Activated naive CD4-positive, alpha-beta T cell treated with anti-CD3 and anti-CD28 coated beads for 36 hours (primary cell): ENCODE measurements at regions of chr1 and their contacts with region 1.

Region 1: GRCh38 chr1:904310-904950 is 19.3 kb upstream of the SAMD11 start:
- DNase-seq: peak; percentile 83
- H3K4me3 Mint-ChIP-seq: peak overlapping the region; percentile 72
- H3K27ac Mint-ChIP-seq: no peak overlapping the region
- H3K4me1 Mint-ChIP-seq: peaks cover 6% of the 10 kb centered on the region
- H3K27me3 Mint-ChIP-seq: peaks cover 39% of the 10 kb centered on the region

Region 2: GRCh38 chr1:869499-870244 is 34.8 kb before region 1 on chr1:
- CTCF ChIA-PET with region 1: interaction called, 5 read pairs
- intact Hi-C with region 1: loop called (anchors 5 kb)
- DNase-seq: peak; percentile 71
- H3K4me3 Mint-ChIP-seq: no peak overlapping the region
- H3K27ac Mint-ChIP-seq: no peak overlapping the region
- H3K4me1 Mint-ChIP-seq: peaks cover 3% of the 10 kb centered on the region
- H3K27me3 Mint-ChIP-seq: peaks cover 11% of the 10 kb centered on the region

Region 3: DNA sequence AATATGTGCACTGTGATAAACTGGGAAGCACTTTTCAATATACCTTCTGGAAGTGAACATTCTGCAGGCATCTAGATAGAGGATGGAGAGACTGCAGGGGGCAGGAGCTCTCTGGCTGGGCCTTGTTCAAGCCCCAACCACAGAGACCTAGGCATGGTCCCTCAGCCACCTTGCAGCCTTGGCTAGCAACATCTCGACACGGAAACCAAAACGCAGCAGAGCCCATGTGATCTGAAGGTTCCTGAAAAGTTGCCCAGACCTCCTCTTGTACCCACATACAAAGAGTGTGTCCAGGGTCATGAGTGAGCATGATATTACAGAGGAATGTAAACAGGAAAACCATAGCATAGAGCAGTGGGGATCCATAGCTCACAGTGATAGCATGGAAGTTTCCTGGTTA is 13.8 kb before region 1 on chr1:
- CTCF ChIA-PET with region 1: no interaction called
- intact Hi-C with region 1: no loop called
- DNase-seq: no peak
- H3K4me3 Mint-ChIP-seq: no peak overlapping the region
- H3K27ac Mint-ChIP-seq: no peak overlapping the region
- H3K4me1 Mint-ChIP-seq: peaks cover 6% of the 10 kb centered on the region
- H3K27me3 Mint-ChIP-seq: peaks cover 25% of the 10 kb centered on the region

Region 4: DNA sequence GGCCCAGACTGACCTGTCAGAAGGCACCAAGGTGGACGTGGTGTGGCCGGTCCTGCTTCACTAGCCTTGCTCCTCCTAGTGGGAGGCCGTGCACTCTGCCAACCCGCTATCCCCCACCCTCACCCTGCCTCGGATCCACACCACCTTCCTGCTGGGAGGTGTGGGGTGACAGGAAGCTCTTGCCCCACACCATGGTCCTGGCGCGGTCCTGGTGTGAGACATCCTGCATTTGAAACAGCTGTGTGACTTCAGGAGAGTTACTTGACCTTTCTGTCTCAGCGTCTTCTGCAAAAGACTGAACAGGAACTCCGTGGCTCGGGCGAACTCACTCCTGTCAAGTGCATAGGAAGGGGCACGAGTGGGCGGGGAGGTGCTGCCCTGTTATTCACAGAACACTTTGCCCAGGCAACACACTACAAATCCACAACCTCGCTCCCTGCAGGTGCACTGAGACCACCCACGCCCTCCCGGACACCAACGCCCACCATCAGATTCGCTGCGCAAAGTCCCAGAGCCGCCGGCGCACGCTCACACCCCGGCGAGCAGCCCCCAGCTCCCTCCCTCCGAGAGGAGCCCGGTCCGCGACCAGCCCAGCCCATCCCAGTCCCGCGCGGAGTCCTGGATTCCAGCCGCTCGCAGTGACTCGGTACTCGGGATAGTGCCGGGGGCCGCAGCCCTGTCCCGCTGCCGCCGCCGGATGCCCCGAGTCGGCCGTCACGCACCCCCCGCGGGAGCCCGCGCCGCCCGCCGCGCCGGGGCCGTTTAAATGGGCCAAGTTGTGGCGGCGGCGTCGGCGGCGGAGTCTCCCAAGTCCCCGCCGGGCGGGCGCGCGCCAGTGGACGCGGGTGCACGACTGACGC is 18.9 kb after region 1 on chr1 and contains the start of gene SAMD11:
- CTCF ChIA-PET with region 1: no interaction called
- intact Hi-C with region 1: loop called (anchors 2 kb)
- DNase-seq: peak; percentile 38
- H3K4me3 Mint-ChIP-seq: peak within 1 kb of the TSS; percentile 68
- H3K27ac Mint-ChIP-seq: no peak within 1 kb of the TSS
- H3K4me1 Mint-ChIP-seq: peaks cover 19% of the 10 kb centered on the region
- H3K27me3 Mint-ChIP-seq: peaks cover 53% of the 10 kb centered on the region
- total RNA-seq, gene SAMD11: not detected

Region 5: GRCh38 chr1:941588-942383 is 37.4 kb after region 1 on chr1:
- CTCF ChIA-PET with region 1: interaction called, 7 read pairs
- intact Hi-C with region 1: loop called (anchors 2 kb)
- DNase-seq: no peak
- H3K4me3 Mint-ChIP-seq: no peak overlapping the region
- H3K27ac Mint-ChIP-seq: no peak overlapping the region
- H3K4me1 Mint-ChIP-seq: peaks cover 7% of the 10 kb centered on the region
- H3K27me3 Mint-ChIP-seq: peaks cover 20% of the 10 kb centered on the region

Region 6: DNA sequence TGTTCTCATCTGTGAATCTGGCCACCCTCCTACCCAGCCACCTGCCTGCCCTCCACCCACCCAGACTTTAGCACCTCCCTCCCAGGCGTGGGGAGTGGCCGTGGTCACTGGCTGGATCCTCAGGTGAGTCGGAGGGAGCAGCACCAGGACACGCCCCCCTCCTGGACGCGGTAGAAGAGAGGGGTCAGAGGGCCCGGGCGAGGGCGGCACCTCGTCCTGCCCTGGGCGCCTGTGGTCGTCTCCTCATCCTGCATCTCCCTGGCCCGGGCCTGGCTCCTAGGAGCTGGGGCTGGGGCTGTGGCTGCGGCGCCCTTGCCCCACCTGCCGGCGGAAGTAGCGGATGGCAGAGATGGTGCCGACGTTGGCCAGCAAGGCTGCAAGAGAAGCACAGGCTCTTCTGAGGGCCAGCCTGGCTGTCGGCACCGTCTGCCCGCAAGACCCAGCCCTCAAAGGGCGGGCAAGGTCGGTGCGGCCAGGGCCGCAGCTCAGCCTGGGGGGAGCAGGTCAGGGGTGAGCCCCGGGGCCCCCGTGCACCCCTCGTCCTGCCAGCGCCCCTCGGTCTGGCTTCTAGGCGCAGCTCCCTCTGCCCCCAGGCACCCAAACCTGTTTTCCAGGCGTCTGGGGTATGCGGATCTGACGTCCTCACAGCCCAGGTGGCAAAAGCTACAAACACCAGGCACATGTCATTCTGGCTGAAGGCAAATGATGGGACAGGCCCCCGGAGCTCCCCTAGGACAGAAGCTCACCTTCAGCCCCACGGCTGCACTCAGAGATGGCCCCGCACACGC is 71.7 kb after region 1 on chr1:
- CTCF ChIA-PET with region 1: interaction called, 11 read pairs
- intact Hi-C with region 1: loop called (anchors 1 kb)
- DNase-seq: peak; percentile 79
- H3K4me3 Mint-ChIP-seq: no peak overlapping the region
- H3K27ac Mint-ChIP-seq: no peak overlapping the region
- H3K4me1 Mint-ChIP-seq: peaks cover 6% of the 10 kb centered on the region
- H3K27me3 Mint-ChIP-seq: peaks cover 19% of the 10 kb centered on the region

Region 7: DNA sequence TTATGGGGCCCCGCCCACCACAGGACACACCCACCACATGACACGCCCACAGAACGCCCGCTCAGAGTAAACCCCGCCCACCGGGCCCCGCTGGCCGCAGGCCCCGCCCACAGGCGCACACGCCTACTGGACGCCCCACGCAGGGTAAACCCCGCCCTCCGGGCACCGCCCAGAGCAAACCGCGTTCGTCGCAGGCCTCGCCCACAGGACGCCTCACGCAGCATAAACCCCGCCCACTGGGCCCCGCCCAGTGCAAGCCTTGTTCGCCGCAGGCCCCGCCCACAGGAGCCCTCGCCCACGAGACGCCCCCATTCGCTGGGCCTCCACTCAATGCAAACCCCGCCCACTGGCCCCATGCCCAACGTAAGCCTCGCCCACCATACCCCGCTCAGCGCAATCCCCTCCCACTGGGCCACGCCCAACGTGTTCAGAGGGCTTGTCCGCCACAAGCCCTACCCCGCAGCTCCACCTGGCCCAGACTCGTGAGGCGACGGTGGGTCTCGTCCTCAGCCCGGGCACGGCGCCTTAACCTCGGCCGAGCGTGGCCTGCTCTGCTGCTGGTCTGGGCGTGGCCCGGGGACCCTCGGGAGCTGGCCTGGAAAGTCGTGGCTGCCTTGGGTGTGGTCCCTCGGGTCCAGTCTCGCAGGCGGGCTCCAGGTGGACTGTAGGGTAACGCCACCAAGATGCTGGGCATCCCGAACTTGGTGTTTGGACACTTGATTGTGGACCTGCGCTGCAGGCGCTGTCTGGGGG is 1015.0 kb after region 1 on chr1:
- CTCF ChIA-PET with region 1: no interaction called
- intact Hi-C with region 1: no loop called
- DNase-seq: peak; percentile 99
- H3K4me3 Mint-ChIP-seq: peak overlapping the region; percentile 67
- H3K27ac Mint-ChIP-seq: no peak overlapping the region
- H3K4me1 Mint-ChIP-seq: peaks cover 4% of the 10 kb centered on the region
- H3K27me3 Mint-ChIP-seq: no peaks in the 10 kb centered on the region